Activated naive CD4-positive, alpha-beta T cell treated with anti-CD3 and anti-CD28 coated beads for 36 hours (primary cell): ENCODE measurements at regions of chr1 and their contacts with region 1.

Region 1: DNA sequence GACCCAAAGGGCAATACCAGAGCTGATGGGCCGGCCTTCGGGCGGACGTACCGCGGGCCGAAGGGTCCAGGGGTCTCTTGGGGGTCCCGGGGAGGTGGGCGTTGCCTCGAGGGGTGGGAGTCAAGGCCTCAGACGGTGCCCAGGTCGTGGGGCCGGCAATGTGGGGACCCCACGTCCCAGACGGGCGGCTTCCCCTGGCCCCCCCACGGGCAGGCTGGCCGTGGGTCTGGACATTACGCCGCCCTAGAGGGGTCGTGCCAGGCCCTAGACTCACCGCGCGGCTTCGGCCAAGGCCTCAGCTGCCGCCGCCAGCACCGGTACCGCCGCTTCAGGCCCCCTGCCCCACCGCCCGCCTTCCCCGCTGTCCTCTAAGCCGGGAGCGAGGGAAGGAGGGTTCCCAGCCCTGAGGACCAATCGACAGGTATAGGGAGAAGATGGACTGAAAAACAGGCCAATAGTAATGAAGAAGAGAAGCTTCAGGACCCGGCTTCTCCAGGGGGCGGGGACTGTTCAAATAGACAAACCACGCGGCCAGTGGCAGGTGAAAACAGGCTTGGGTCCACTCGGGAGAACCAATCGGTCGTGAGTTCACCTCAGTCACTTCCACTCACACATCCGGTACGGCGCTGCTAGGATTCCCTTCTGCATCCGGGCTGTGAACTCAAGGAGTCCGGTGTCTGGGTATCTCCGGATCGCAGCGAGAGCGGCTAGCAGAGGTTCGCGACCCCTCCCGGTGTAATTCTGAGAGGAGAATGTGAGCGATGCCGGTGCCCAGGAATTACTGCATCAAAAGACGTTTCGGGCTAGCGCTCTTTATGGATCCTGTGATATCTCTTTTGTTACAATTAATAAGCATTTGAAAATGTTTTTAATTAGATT is at the start of gene MTOR:
- DNase-seq: peak; percentile 99
- H3K4me3 Mint-ChIP-seq: peak within 1 kb of the TSS; percentile 96
- H3K27ac Mint-ChIP-seq: peak within 1 kb of the TSS; percentile 79
- H3K4me1 Mint-ChIP-seq: peaks cover 22% of the 10 kb centered on the region
- H3K27me3 Mint-ChIP-seq: no peaks in the 10 kb centered on the region
- total RNA-seq, gene MTOR: 38.5 to 39.0 TPM

Region 2: DNA sequence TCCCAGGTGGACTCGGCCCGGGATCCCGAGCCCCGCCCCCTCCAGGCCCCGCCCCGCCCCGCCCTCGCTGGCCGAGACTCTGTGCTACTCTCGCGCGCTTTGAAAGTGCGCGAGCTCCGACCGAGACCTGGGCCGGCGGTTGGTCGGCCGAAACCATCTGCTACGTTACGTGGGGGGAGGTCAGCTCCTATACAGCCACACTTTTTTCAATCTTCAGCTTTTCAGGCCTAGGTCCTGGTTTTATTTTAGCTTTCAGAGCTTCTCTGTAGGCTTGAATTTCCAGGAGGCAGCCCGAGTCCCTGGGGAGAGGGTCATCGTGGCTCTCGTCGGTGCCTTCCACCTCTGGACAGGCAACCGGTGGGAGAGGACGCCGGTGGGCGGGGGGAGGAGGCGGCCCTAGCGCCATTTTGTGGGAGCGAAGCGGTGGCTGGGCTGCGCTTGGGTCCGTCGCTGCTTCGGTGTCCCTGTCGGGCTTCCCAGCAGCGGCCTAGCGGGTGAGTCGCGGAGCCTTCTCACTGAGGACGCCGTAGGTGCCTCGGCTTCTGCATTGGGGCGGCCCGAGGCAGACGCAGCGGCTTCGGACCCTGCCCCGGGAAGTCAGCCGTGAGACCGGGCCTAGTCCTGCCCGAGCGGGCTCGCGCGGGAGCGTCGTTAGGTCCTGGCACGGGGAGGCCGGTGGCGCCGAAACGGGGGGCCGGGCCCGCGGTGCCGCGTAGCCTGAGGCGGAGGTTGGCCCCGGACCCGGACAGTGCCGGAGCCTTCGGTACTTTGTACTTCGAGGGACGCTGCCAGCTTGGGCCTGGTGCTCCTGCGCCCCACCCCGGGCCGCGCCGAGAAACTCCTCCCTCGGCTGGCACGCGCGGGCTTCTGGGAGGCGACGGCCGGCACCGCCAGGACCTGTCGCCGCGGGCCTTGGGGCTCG is 249.9 kb before region 1 on chr1 and contains the start of gene TARDBP:
- CTCF ChIA-PET with region 1: no interaction called
- intact Hi-C with region 1: loop called (anchors 1 kb)
- DNase-seq: peak; percentile 92
- H3K4me3 Mint-ChIP-seq: peak within 1 kb of the TSS; percentile 88
- H3K27ac Mint-ChIP-seq: peak within 1 kb of the TSS; percentile 98
- H3K4me1 Mint-ChIP-seq: peaks cover 29% of the 10 kb centered on the region
- H3K27me3 Mint-ChIP-seq: no peaks in the 10 kb centered on the region
- total RNA-seq, gene TARDBP: 158 to 159 TPM

Region 3: DNA sequence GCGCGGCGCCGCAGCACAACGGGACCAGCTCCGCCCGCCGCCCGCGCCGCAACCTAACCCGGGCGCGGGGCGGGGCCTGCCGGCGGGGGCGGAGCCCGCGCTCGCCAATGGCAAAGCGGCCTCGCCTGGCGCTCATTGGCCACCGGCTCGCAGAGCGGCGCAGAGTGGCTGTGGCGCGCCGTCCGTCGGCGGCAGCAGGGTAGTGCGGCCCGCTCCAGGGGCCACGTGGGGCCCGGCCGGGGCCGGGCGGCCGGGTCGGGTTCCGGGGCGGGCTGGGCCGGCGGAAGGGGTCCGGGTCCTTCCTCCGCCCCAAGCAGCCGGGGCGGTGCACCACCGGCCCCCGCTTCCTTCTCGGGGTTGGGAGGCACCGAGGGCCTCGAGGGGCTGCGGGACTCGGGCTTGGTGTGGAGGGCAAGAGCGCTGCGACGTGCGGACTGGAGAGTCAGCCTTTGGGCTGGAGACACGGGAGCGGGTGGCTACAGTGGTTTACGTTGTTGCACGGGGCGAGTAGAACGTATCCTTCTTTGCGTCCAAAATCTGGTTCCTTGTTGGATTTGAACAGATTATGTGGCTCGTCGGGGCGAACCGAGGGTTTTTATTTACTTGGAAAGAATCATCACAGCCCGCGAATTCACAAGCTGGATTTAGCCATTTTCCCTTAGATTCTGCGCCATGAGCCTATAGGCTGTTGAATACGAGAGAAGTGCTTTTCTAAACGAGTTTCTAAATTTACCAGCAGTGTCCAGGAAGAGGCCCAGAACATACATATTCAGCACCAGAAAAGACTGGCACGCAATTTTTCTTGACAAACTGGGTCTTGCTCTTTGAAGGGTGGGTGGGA is 202.2 kb before region 1 on chr1 and contains the start of gene SRM:
- CTCF ChIA-PET with region 1: no interaction called
- intact Hi-C with region 1: loop called (anchors 1 kb)
- DNase-seq: peak; percentile 89
- H3K4me3 Mint-ChIP-seq: peak within 1 kb of the TSS; percentile 95
- H3K27ac Mint-ChIP-seq: peak within 1 kb of the TSS; percentile 82
- H3K4me1 Mint-ChIP-seq: peaks cover 45% of the 10 kb centered on the region
- H3K27me3 Mint-ChIP-seq: no peaks in the 10 kb centered on the region
- total RNA-seq, gene SRM: 207 to 222 TPM

Region 4: GRCh38 chr1:11072216-11072917 is 190.0 kb before region 1 on chr1:
- CTCF ChIA-PET with region 1: no interaction called
- intact Hi-C with region 1: no loop called
- DNase-seq: no peak
- H3K4me3 Mint-ChIP-seq: no peak overlapping the region
- H3K27ac Mint-ChIP-seq: no peak overlapping the region
- H3K4me1 Mint-ChIP-seq: peaks cover 8% of the 10 kb centered on the region
- H3K27me3 Mint-ChIP-seq: no peaks in the 10 kb centered on the region

Region 5: GRCh38 chr1:11099310-11100149 is 162.9 kb before region 1 on chr1 and contains the start of gene EXOSC10:
- CTCF ChIA-PET with region 1: no interaction called
- intact Hi-C with region 1: loop called (anchors 1 kb)
- DNase-seq: peak; percentile 95
- H3K4me3 Mint-ChIP-seq: peak within 1 kb of the TSS; percentile 96
- H3K27ac Mint-ChIP-seq: peak within 1 kb of the TSS; percentile 90
- H3K4me1 Mint-ChIP-seq: peaks cover 8% of the 10 kb centered on the region
- H3K27me3 Mint-ChIP-seq: no peaks in the 10 kb centered on the region
- total RNA-seq, gene EXOSC10: 57.9 to 59.3 TPM

Region 6: GRCh38 chr1:11272832-11273594 is 10.6 kb after region 1 on chr1 and contains the start of gene UBIAD1:
- CTCF ChIA-PET with region 1: no interaction called
- intact Hi-C with region 1: loop called (anchors 1 kb)
- DNase-seq: peak; percentile 91
- H3K4me3 Mint-ChIP-seq: peak within 1 kb of the TSS; percentile 94
- H3K27ac Mint-ChIP-seq: peak within 1 kb of the TSS; percentile 85
- H3K4me1 Mint-ChIP-seq: peaks cover 33% of the 10 kb centered on the region
- H3K27me3 Mint-ChIP-seq: no peaks in the 10 kb centered on the region
- total RNA-seq, gene UBIAD1: 19.9 to 20.2 TPM

Region 7: GRCh38 chr1:11805447-11806306 is 543.3 kb after region 1 on chr1 and contains the starts of genes CLCN6 and MTHFR:
- CTCF ChIA-PET with region 1: no interaction called
- intact Hi-C with region 1: loop called (anchors 5 kb)
- DNase-seq: peak; percentile 99
- H3K4me3 Mint-ChIP-seq: peak within 1 kb of the TSS; percentile 99
- H3K27ac Mint-ChIP-seq: peak within 1 kb of the TSS; percentile 96
- H3K4me1 Mint-ChIP-seq: peaks cover 59% of the 10 kb centered on the region
- H3K27me3 Mint-ChIP-seq: no peaks in the 10 kb centered on the region
- total RNA-seq, gene CLCN6: 11.3 to 11.6 TPM
- total RNA-seq, gene MTHFR: 7.1 to 7.9 TPM